ENCODE measurements at regions of chr15 and their contacts with region 1.

Region 1: DNA sequence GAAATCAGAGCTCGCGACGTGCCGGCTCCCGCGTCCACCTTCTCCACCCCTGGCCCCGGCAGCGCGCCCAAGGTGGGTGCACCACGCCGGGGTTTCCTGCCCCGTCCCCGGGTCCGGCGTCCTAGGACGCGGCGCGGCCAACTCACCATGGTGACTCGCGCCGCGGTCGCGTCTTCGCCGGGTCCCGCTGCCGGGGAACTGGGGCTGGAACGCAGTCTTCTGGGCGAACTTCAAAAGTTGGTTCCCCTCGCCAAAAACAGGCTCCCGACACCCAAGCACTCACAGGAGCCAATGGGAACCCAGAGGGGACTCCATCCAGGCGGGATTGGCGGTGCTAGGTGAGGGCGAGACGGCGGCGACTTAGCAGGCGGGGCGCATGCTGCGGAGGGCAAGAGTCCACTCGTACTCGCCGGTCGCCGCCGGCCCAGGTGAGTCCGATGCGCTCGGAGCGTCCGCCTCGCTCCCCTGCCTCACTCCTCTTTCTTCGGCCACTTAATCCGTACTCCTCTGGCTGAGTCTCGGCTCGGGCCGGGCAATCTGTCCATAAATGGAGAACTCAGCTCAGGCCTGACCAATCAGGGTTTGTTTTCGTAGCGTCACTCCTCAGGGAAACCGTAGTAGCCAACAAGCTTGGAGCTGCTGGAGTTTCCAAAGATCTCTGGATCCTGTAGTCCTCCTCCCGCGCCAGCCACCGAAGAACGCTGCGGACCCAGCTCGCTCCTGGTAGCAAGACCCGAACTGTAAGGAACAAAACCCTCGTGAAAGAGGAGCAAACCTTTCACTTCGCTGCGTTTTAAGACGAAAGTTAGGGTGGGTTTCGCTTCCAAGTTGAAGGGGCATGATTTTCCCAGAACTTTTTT is at the start of gene MYO1E:
- DNase-seq: peak; percentile 86
- H3K4me3 ChIP-seq: peak within 1 kb of the TSS; percentile 61 to 96 (median 84)
- H3K27ac ChIP-seq: peak within 1 kb of the TSS; percentile 77 to 91 (median 87)
- H3K4me1 ChIP-seq: peaks cover 0 to 67% (median 41%) of the 10 kb centered on the region in 6 donors
- H3K27me3 ChIP-seq: peaks cover 0 to 38% (median 7%) of the 10 kb centered on the region in 7 donors
- CTCF ChIP-seq: no peak
- POLR2A ChIP-seq: peak in 2 of 3 donors; percentile 27 to 81
- total RNA-seq, gene MYO1E: 58.4 to 115 (median 87.2) TPM

Region 2: GRCh38 chr15:59174835-59175831 is 197.4 kb before region 1 on chr15:
- intact Hi-C with region 1: loop called (anchors 5 kb)
- DNase-seq: no peak
- H3K4me3 ChIP-seq: no peak overlapping the region
- H3K27ac ChIP-seq: peak overlapping the region in 7 of 8 donors; percentile 9 to 63 (median 46)
- H3K4me1 ChIP-seq: peaks cover under 1 to 51% (median 9%) of the 10 kb centered on the region in 6 donors
- H3K27me3 ChIP-seq: no peaks in the 10 kb centered on the region
- CTCF ChIP-seq: peak; percentile 17 to 74 (median 52)
- POLR2A ChIP-seq: no peak

Region 3: GRCh38 chr15:59484399-59484798 is 111.8 kb after region 1 on chr15:
- intact Hi-C with region 1: no loop called
- DNase-seq: no peak
- H3K4me3 ChIP-seq: no peak overlapping the region
- H3K27ac ChIP-seq: no peak overlapping the region
- H3K4me1 ChIP-seq: peaks cover 0 to 13% (median 4%) of the 10 kb centered on the region in 6 donors
- H3K27me3 ChIP-seq: no peaks in the 10 kb centered on the region
- CTCF ChIP-seq: no peak
- POLR2A ChIP-seq: no peak

Measured in spleen (tissue), 13 donors.